Activated CD8-positive, alpha-beta T cell treated with anti-CD3 and anti-CD28 coated beads, Interleukin-2, amount 10 ng/mL, durations not matched to agents 7 days and 5 days (primary cell): ENCODE measurements at regions of chr3 and their contacts with region 1.

Region 1: GRCh38 chr3:100089812-100090668 is 24.3 kb downstream of the FILIP1L start:
- DNase-seq: peak; percentile 56
- ATAC-seq: peak; percentile 84
- H3K4me3 Mint-ChIP-seq: no peak overlapping the region
- H3K27ac Mint-ChIP-seq: peak overlapping the region; percentile 43
- H3K4me1 Mint-ChIP-seq: peaks cover 61% of the 10 kb centered on the region
- H3K27me3 Mint-ChIP-seq: peaks cover 3% of the 10 kb centered on the region

Region 2: DNA sequence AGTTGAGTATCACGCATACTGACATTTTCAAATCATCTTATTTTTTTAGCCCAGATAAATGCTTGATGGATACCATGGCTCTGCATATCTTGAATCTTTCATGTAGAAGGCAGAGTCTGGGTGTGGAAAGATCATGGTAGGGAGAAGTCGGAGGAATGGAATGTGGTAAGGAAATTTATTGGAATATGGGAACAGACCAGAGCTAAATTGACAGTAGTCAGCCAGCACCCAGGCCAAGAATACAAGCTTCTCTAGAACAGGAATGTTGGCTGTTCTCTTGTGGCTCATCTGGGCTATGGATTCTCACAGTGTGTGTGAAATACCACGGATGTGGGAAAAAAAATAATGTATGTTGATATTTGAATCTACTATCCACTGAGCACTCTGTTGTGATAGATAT is 757.3 kb before region 1 on chr3:
- CTCF ChIA-PET with region 1: no interaction called
- POLR2A ChIA-PET with region 1: no interaction called
- DNase-seq: no peak
- ATAC-seq: no peak
- H3K4me3 Mint-ChIP-seq: no peak overlapping the region
- H3K27ac Mint-ChIP-seq: no peak overlapping the region
- H3K4me1 Mint-ChIP-seq: no peaks in the 10 kb centered on the region
- H3K27me3 Mint-ChIP-seq: no peaks in the 10 kb centered on the region

Region 3: DNA sequence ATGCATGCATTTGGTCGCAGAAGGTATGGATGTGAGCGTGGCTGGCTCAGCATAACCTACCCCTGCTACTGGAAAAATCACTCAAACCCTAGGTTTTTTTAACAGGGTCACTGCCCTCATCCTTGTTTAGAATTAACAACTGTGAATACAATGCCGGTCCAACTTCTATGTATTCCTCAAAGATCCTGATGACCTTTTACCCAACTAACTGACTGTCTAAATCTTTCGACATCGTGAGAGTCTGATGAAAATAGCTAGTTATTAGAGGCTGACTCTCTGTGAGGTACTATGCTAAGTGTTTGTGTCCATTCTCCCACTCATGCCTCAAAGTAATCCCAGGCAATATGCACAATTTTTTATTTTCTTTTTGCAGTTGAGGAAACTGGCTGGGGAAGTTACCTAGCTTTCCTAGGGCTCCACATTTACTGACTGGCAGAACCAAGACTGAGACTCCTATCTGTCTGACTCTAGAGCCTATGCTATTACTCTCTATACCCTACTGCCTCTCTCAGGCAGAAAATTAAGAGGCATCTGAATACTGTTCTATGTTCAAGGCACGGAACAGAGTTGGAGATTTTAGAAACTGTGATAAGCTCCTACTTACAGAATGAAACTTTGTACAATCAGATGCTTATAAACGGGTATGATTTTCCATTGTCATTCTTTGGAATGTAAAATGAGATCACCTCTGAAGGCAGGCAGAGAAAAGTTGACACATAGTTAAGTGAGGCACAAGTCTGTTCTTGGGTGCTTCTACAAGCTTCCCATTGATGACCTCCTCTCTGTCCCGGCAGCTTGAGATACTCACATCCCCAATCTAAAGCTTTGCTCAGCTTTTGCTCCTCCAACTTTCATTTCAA is 32.1 kb before region 1 on chr3:
- CTCF ChIA-PET with region 1: interaction called, 10 read pairs
- POLR2A ChIA-PET with region 1: no interaction called
- DNase-seq: no peak
- ATAC-seq: no peak
- H3K4me3 Mint-ChIP-seq: no peak overlapping the region
- H3K27ac Mint-ChIP-seq: no peak overlapping the region
- H3K4me1 Mint-ChIP-seq: peaks cover 22% of the 10 kb centered on the region
- H3K27me3 Mint-ChIP-seq: no peaks in the 10 kb centered on the region

Region 4: DNA sequence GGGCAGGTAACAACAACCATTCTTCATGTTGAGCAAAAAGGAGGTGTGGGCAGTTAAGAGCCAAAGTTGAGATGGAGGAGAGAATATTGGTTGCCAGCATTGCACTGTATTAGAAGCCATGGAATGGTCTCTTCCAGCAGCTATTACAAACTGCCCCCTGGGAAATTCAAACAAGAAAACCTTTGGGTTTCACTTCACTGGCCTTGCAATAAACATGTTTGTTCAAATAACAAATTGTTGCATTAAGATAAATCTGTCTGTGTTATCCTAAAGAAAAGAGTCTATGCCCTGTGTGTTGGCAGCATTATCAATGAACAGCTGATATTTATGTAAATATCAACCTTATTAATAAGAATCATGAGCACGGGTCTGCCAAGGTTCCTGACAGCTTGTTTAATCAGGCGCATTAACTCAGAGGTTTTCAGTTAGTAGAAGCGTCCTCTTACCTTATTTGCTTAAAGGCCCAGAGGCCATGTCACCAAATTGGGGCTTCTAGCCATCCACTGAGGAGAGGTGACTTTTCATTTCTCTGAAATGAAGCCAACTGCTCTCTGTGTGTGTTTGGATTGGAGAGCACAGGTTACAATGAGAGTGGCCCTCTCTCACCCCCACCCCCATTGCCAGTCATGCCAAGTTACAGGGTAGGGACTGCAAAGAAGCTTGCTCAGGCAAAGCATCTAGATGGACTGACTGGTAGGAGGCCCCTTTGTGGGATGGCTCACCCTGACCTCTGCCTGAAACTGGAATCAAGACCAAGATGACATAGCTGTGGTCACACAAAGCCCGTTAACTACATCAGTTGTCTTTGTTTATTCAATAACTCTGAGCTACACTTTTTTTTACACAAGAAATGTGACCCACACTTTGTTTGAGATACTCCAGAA is 13.8 kb after region 1 on chr3:
- CTCF ChIA-PET with region 1: interaction called, 15 read pairs
- POLR2A ChIA-PET with region 1: no interaction called
- DNase-seq: no peak
- ATAC-seq: no peak
- H3K4me3 Mint-ChIP-seq: no peak overlapping the region
- H3K27ac Mint-ChIP-seq: peak overlapping the region; percentile 31
- H3K4me1 Mint-ChIP-seq: peaks cover 59% of the 10 kb centered on the region
- H3K27me3 Mint-ChIP-seq: no peaks in the 10 kb centered on the region

Region 5: DNA sequence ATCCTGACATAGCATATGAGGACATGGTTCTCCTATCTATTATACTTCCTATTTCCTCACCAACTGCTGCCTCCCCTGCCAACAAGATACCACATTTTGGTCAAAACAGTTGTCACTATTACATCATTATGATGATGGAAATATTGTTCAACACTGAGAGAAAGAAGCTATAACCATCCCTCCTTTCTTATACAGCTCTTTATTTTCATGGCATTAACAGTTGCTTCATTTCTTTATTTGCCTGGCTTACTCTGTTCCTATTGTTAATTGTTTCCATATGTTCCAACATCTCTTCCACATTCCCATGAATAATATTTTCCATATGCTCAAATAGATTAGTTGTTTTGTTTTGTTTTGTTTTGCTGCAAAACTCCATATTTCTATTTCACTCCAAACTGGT is 65.1 kb after region 1 on chr3:
- CTCF ChIA-PET with region 1: no interaction called
- POLR2A ChIA-PET with region 1: no interaction called
- DNase-seq: no peak
- ATAC-seq: no peak
- H3K4me3 Mint-ChIP-seq: no peak overlapping the region
- H3K27ac Mint-ChIP-seq: no peak overlapping the region
- H3K4me1 Mint-ChIP-seq: no peaks in the 10 kb centered on the region
- H3K27me3 Mint-ChIP-seq: no peaks in the 10 kb centered on the region